H1 (cell line): ENCODE measurements at regions of chr17 and their contacts with region 1.

Region 1: DNA sequence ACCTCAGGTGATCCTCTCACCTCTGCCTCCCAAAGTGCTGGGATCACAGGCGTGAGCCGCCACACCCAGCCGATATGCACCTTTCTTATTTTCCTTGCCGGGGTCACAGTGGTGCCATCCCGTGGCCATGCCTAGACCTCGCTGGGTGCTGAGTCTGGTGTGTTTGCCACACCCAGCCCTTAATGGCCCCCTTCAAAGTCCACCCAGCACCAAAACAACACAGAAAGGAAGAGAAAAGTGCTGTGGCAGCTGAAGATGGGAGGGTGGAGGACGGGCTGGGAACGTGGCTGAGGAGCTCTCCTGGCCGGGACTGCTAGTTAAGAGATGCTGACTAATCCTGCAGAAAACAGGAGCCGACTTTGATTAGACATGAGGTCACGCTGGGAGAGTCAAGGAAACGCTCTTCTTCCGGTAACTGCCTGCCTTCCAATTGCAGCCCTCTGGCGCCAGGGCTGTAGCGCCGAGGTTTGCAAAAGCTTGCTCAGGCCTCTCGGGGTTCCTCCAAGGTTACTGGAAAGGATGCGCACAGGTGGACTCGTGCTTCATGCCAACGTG is 10.9 kb downstream of the SLC43A2 start:
- DNase-seq: no peak
- H3K4me3 ChIP-seq: no peak overlapping the region
- H3K27ac ChIP-seq: no peak overlapping the region
- H3K4me1 ChIP-seq: peaks cover 0 to 4% (median 0%) of the 10 kb centered on the region in 4 experiments; a peak in 2 of 7 replicates
- H3K27me3 ChIP-seq: no peaks in the 10 kb centered on the region
- CTCF ChIP-seq: no peak
- EP300 ChIP-seq: no peak
- POLR2A ChIP-seq: no peak
- RAD21 ChIP-seq: no peak; a peak in 1 of 4 replicates

Region 2: DNA sequence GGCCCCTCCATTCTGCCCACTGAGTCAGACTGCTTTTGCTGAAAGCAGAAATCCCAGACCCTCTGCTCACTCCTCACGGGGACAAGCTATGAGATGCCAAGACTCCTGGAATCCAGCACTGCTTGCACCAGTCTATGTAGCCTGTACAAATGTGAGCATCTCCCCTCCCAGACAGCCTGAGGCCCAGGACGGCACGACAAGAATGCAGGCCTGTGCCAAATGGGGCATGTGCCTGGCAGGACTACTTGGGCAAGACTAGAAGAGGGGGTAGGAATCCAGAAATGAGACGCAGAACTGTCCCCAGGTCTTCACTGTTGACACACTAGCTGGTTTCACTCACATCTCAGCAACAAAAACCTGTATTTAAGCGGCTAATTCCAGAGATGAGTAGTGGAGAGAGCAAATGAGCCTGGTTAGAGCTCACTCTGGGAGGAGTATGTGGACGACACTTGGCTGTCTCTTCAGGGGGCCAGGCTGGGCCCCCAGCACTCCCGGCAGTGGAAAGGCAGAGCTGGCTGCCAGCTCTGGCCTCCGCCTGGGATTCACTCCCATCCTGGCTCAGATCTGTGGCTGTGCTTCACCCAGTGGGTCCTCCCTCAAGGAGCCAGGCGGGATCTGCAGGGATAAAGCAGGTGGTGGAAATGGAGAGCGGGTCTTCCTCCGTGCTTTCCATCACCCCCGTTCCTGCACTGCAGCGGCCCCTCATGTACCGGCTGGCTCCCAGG is 122.3 kb before region 1 on chr17:
- CTCF ChIA-PET with region 1: no interaction called
- POLR2A ChIA-PET with region 1: no interaction called
- DNase-seq: no peak
- H3K4me3 ChIP-seq: no peak overlapping the region
- H3K27ac ChIP-seq: no peak overlapping the region
- H3K4me1 ChIP-seq: peaks cover 0 to 9% (median 4%) of the 10 kb centered on the region in 4 experiments; a peak in 4 of 7 replicates
- H3K27me3 ChIP-seq: no peaks in the 10 kb centered on the region
- CTCF ChIP-seq: no peak
- EP300 ChIP-seq: no peak
- POLR2A ChIP-seq: no peak
- RAD21 ChIP-seq: no peak

Region 3: GRCh38 chr17:1606352-1607033 is 11.2 kb before region 1 on chr17:
- CTCF ChIA-PET with region 1: interaction called, 12 read pairs
- POLR2A ChIA-PET with region 1: interaction called, 4 read pairs
- DNase-seq: no peak
- H3K4me3 ChIP-seq: no peak overlapping the region
- H3K27ac ChIP-seq: no peak overlapping the region
- H3K4me1 ChIP-seq: peaks cover 0 to 14% (median 11%) of the 10 kb centered on the region in 4 experiments; a peak in 6 of 7 replicates
- H3K27me3 ChIP-seq: no peaks in the 10 kb centered on the region
- CTCF ChIP-seq: no peak
- EP300 ChIP-seq: no peak
- POLR2A ChIP-seq: no peak
- RAD21 ChIP-seq: no peak